Mammary epithelial cell (primary cell): ENCODE measurements at regions of chr10 and their contacts with region 1.

Region 1: DNA sequence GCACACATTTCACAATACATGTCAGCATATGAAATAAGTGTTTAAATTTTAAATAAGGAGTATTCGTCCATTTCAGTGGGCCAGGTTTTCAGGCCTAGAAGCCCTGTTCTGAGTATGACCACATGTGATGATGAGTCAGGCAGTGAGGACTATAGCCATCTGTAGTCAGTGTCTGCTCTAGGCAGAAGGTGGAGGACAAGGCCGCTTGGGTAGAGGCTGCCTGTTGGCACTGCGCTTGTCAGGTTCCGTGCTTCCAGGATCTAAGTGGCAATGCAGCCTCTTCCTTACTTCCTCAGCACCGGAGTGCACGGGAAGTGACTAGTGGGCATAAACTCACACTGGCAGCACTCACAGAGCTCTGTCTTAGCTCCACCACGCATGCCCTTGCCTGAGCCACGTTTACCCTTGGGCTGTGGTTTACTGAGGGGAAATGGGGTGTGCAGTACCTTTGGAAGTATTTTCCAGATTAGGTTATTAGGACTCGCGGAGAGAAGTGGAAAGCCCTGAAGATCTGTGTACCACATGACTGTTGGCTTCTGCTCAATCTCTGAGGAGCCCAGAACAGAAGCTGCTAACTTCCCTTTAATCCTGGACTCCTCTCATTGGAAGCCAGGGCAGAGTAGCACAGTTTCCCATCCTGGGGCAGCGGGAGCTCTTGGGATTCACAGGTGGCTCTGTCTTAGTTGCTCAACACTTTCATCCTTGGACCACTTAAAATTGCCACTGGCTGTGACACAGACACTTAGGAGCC is 87.5 kb upstream of the GJD4 start:
- DNase-seq: peak; percentile 6
- H3K4me3 ChIP-seq: no peak overlapping the region
- H3K27ac ChIP-seq: no peak overlapping the region
- H3K4me1 ChIP-seq: no peaks in the 10 kb centered on the region
- H3K27me3 ChIP-seq: no peaks in the 10 kb centered on the region
- CTCF ChIP-seq: no peak

Region 2: GRCh38 chr10:35546824-35547273 is 29.2 kb after region 1 on chr10:
- CTCF ChIA-PET with region 1: interaction called, 36 read pairs
- dilution Hi-C with region 1: no loop called
- in situ Hi-C with region 1: no loop called
- intact Hi-C with region 1: no loop called
- DNase-seq: peak; percentile 95
- H3K4me3 ChIP-seq: no peak overlapping the region
- H3K27ac ChIP-seq: peak overlapping the region; percentile 79
- H3K4me1 ChIP-seq: peaks cover 26% of the 10 kb centered on the region
- H3K27me3 ChIP-seq: no peaks in the 10 kb centered on the region
- CTCF ChIP-seq: peak in 1 of 2 donors; percentile 39